ENCODE measurements at regions of chrX and their contacts with region 1.

Region 1: GRCh38 chrX:119516157-119516702 is 48.0 kb downstream of the SLC25A5 start:
- DNase-seq: peak; percentile 69
- H3K4me3 Mint-ChIP-seq: no peak overlapping the region
- H3K27ac Mint-ChIP-seq: no peak overlapping the region
- H3K4me1 Mint-ChIP-seq: no peaks in the 10 kb centered on the region
- H3K27me3 Mint-ChIP-seq: peaks cover 13% of the 10 kb centered on the region
- CTCF ChIP-seq: peak; percentile 65

Region 2: GRCh38 chrX:119391279-119391678 is 125.0 kb before region 1 on chrX:
- CTCF ChIA-PET with region 1: interaction called, 5 read pairs
- POLR2A ChIA-PET with region 1: no interaction called
- intact Hi-C with region 1: loop called (anchors 2 kb)
- DNase-seq: peak; percentile 59
- H3K4me3 Mint-ChIP-seq: no peak overlapping the region
- H3K27ac Mint-ChIP-seq: no peak overlapping the region
- H3K4me1 Mint-ChIP-seq: no peaks in the 10 kb centered on the region
- H3K27me3 Mint-ChIP-seq: peaks cover 13% of the 10 kb centered on the region
- CTCF ChIP-seq: peak; percentile 7

Region 3: DNA sequence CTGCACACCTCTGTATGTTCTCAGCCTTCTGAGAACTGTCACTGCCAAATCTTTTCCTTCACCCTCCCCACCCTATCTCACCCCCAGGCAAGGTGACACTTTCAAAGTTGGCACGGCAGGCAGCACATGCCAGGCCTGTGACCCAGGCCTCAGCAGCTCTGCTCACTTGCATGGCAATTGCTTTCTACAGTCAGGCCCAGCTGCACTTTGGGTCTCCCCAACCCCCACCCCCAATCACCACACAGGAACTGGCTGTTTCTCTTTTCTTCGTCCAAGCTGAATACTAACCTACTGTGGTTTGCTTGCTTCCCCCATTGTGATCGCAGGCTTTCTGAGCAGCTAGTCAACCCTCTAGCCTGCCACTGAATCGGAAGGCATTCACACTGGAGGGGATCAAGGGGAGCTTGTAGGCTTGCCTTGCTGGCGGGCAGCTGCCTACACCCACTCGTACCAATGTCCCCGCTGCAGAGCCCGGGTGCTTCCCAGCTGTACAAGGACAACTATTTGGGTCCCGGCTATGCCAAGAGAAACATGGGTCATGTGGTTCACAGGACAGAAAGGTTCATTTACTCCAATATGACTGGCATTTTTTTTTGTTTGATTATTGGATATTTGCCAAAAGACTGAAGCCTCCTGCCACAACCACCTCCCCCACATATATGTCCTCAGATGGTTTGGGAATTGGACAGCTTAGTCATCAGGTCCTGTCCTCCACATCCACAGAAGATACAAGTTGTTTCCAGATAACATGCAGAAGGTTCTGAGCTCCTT is 89.0 kb before region 1 on chrX:
- CTCF ChIA-PET with region 1: no interaction called
- POLR2A ChIA-PET with region 1: no interaction called
- intact Hi-C with region 1: no loop called
- DNase-seq: peak; percentile 53
- H3K4me3 Mint-ChIP-seq: no peak overlapping the region
- H3K27ac Mint-ChIP-seq: peak overlapping the region; percentile 0
- H3K4me1 Mint-ChIP-seq: peaks cover 14% of the 10 kb centered on the region
- H3K27me3 Mint-ChIP-seq: peaks cover 10% of the 10 kb centered on the region
- CTCF ChIP-seq: no peak

Region 4: GRCh38 chrX:119482481-119483480 is 33.4 kb before region 1 on chrX:
- CTCF ChIA-PET with region 1: interaction called, 485 read pairs
- POLR2A ChIA-PET with region 1: interaction called, 3 read pairs
- intact Hi-C with region 1: loop called (anchors 5 kb)
- DNase-seq: peak; percentile 60
- H3K4me3 Mint-ChIP-seq: peak overlapping the region; percentile 19
- H3K27ac Mint-ChIP-seq: no peak overlapping the region
- H3K4me1 Mint-ChIP-seq: peaks cover 12% of the 10 kb centered on the region
- H3K27me3 Mint-ChIP-seq: no peaks in the 10 kb centered on the region
- CTCF ChIP-seq: peak; percentile 41

Region 5: DNA sequence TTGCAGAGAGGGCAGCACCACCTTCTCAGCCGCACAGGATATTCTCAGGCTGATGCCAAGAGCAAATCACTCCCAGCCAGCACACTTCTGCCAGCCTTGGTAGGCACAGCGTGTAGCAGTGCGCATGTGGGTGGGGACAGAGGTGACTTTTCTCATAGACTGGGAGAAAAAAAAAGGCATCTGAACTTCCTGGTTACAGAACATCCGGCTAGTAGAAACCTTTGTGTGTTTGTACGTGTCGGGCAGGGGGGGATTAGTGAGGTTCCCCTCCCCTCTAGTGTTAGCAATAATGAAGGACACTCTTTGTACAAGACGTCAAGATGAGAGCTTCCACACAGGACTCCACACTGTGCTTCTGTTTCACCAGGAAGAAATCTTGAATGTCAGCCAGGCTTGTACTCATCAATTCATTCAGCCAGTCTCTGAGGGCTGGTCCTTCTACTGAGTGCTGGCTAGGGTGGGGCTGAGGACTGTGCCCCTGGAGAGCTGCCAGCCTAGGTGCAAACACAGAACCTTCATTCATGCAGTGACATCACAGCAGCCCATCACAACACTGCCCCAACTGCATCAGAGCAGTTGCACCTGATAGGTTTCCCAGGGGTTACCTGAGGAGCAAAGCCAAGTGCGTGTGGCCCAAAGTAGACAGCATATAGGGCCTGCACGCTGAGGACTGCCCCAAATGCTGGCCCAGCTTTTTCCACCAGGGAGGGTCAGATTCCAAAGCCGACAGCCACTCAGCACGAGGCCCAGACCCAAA is 13.3 kb before region 1 on chrX:
- CTCF ChIA-PET with region 1: interaction called, 485 read pairs
- POLR2A ChIA-PET with region 1: interaction called, 8 read pairs
- intact Hi-C with region 1: no loop called
- DNase-seq: peak; percentile 79
- H3K4me3 Mint-ChIP-seq: no peak overlapping the region
- H3K27ac Mint-ChIP-seq: peak overlapping the region; percentile 3
- H3K4me1 Mint-ChIP-seq: peaks cover 22% of the 10 kb centered on the region
- H3K27me3 Mint-ChIP-seq: no peaks in the 10 kb centered on the region
- CTCF ChIP-seq: no peak

Region 6: GRCh38 chrX:119606280-119607015 is 90.2 kb after region 1 on chrX and contains the start of gene NKRF:
- CTCF ChIA-PET with region 1: interaction called, 3 read pairs
- POLR2A ChIA-PET with region 1: no interaction called
- intact Hi-C with region 1: loop called (anchors 1 kb)
- DNase-seq: peak; percentile 89
- H3K4me3 Mint-ChIP-seq: peak within 1 kb of the TSS; percentile 88
- H3K27ac Mint-ChIP-seq: peak within 1 kb of the TSS; percentile 91
- H3K4me1 Mint-ChIP-seq: peaks cover 4% of the 10 kb centered on the region
- H3K27me3 Mint-ChIP-seq: no peaks in the 10 kb centered on the region
- CTCF ChIP-seq: no peak
- total RNA-seq, gene NKRF: 12.5 and 16.1 TPM in 2 replicates

Region 7: DNA sequence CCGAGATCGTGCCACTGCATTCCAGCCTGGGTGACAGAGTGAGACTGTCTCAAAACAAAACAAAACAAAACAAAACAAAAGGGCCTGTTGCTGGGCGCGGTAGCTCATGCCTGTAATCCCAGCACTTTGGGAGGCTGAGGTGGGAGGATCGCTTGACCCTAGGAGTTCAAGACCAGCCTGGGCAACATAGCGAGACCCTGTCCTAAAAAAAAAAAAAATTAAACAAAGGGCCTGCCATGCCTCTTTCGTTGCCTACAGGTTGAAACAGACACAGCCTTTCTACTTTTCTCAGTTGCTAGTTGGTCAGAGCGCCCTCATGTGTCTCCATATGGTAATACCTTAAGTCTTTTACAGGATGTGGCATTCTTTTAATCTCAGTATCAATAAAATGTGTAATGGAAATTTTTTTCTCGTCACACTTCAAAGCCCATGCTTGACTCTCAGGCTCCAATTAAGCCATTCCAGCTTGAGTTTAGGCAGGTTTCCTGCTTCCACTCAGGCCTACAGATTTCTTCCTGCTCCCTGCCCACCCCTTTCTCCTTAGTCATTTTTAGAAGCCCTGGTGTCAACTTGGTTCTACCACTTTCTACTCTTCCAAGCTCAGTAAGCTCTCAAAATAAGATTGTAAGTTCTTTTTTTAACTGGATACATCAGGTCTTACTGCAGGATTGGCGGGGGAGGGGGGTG is 237.5 kb after region 1 on chrX:
- CTCF ChIA-PET with region 1: no interaction called
- POLR2A ChIA-PET with region 1: no interaction called
- intact Hi-C with region 1: loop called (anchors 1 kb)
- DNase-seq: peak; percentile 48
- H3K4me3 Mint-ChIP-seq: no peak overlapping the region
- H3K27ac Mint-ChIP-seq: no peak overlapping the region
- H3K4me1 Mint-ChIP-seq: no peaks in the 10 kb centered on the region
- H3K27me3 Mint-ChIP-seq: no peaks in the 10 kb centered on the region
- CTCF ChIP-seq: peak; percentile 18